Activated naive CD4-positive, alpha-beta T cell treated with anti-CD3 and anti-CD28 coated beads, Interleukin-2, amount 10 ng/mL, durations not matched to agents 7 days and 5 days (primary cell): ENCODE measurements at regions of chr3 and their contacts with region 1.

Region 1: GRCh38 chr3:146189519-146190173 is 28.7 kb upstream of the PLOD2 start:
- DNase-seq: no peak
- H3K4me3 Mint-ChIP-seq: no peak overlapping the region
- H3K27ac Mint-ChIP-seq: no peak overlapping the region
- H3K4me1 Mint-ChIP-seq: no peaks in the 10 kb centered on the region
- H3K27me3 Mint-ChIP-seq: peaks cover 4% of the 10 kb centered on the region

Region 2: DNA sequence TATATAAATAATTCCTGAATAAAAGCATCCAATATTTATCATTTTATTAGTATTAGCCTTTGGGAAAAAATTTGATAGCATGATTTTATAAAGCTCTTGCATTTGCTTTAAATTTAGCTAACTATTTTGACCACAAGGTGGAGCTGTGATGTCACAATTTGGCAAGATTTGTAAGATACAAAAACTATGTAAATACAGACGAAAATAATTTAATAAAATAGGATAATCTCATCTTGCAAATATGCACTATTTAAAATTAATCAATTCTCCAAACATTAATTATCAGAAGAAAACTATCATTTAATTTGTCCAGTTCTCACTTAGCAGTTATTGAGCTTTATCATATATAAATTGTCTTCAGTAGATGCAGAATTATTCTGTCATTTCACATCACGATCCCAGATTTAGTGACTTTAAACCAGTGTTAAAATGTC is 124.1 kb before region 1 on chr3:
- CTCF ChIA-PET with region 1: interaction called, 40 read pairs
- DNase-seq: no peak
- H3K4me3 Mint-ChIP-seq: no peak overlapping the region
- H3K27ac Mint-ChIP-seq: no peak overlapping the region
- H3K4me1 Mint-ChIP-seq: no peaks in the 10 kb centered on the region
- H3K27me3 Mint-ChIP-seq: no peaks in the 10 kb centered on the region

Region 3: GRCh38 chr3:146250449-146251382 is 61.1 kb after region 1 on chr3 and contains the start of gene PLSCR4:
- CTCF ChIA-PET with region 1: no interaction called
- DNase-seq: peak; percentile 41
- H3K4me3 Mint-ChIP-seq: peak within 1 kb of the TSS; percentile 74
- H3K27ac Mint-ChIP-seq: no peak within 1 kb of the TSS
- H3K4me1 Mint-ChIP-seq: peaks cover 4% of the 10 kb centered on the region
- H3K27me3 Mint-ChIP-seq: peaks cover 26% of the 10 kb centered on the region

Region 4: DNA sequence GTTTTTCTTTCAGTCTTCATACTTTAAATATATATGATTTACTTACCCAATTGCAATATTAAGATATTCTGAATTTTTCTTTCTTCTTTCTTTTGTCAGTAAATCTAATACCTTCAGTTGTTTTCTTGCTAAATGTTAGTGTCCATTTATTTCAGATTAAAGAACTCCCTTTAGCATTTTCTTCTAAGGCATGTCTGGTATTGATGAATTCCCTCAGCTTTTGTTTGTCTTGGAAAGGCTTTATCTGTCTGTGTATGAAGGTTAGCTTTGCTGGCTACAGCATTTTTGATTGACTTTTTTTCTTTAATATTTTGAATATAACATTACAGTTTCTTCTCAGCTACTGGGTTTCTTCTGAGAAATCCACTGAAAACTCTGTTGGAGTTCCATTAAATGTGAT is 125.2 kb after region 1 on chr3:
- CTCF ChIA-PET with region 1: no interaction called
- DNase-seq: no peak
- H3K4me3 Mint-ChIP-seq: no peak overlapping the region
- H3K27ac Mint-ChIP-seq: no peak overlapping the region
- H3K4me1 Mint-ChIP-seq: no peaks in the 10 kb centered on the region
- H3K27me3 Mint-ChIP-seq: no peaks in the 10 kb centered on the region

Region 5: DNA sequence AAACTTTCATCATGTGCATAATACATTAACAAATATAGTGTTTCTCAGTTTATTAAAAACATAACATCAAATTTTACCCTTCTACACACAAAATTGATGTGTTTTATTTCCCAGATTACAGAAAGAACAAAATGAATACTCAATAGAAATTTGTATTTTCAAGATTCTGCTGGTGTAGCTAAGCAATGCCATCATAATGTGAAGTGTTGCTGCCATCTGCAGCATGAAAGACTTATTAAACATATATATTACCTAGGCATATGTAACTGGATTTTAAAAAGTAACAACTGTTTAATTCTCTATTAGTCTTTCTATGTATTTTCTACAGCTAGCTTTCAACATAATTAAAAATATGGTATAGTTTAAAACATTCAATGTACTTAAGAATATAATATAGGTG is 388.0 kb after region 1 on chr3:
- CTCF ChIA-PET with region 1: interaction called, 27 read pairs
- DNase-seq: peak; percentile 53
- H3K4me3 Mint-ChIP-seq: no peak overlapping the region
- H3K27ac Mint-ChIP-seq: no peak overlapping the region
- H3K4me1 Mint-ChIP-seq: no peaks in the 10 kb centered on the region
- H3K27me3 Mint-ChIP-seq: peaks cover 3% of the 10 kb centered on the region